Dendritic cell treated with granulocyte-macrophage colony-stimulating factor and Interleukin-4, amounts not matched to agents 40 ng/mL and 50 ng/mL, for 4 days (primary cell): ENCODE measurements at regions of chr9 and their contacts with region 1.

Region 1: DNA sequence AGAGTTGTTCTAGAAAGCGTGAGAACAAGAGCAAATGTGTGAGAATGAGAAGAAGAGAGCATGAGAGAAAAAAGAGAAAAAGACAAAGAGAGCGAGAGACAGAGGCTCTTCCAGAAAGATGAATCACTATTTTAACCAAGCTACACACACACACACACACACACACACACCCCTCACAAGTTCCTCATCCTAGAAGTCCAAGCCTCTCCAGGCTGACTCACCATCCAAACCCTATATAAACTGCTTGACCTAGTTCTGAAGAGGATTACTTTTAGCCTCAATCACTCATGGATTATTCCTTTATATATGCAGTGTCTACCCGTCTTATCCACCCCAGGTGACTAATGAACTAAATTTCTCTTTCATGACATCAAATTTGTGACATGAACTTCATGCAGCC is 37.6 kb downstream of the C9orf57 start:
- H3K4me3 Mint-ChIP-seq: no peak overlapping the region
- H3K27ac Mint-ChIP-seq: no peak overlapping the region
- H3K4me1 Mint-ChIP-seq: peaks cover 8% of the 10 kb centered on the region
- H3K27me3 Mint-ChIP-seq: no peaks in the 10 kb centered on the region

Region 2: GRCh38 chr9:71285191-71285656 is 737.6 kb before region 1 on chr9:
- intact Hi-C with region 1: loop called (anchors 5 kb)
- H3K4me3 Mint-ChIP-seq: no peak overlapping the region
- H3K27ac Mint-ChIP-seq: no peak overlapping the region
- H3K4me1 Mint-ChIP-seq: no peaks in the 10 kb centered on the region
- H3K27me3 Mint-ChIP-seq: no peaks in the 10 kb centered on the region

Region 3: DNA sequence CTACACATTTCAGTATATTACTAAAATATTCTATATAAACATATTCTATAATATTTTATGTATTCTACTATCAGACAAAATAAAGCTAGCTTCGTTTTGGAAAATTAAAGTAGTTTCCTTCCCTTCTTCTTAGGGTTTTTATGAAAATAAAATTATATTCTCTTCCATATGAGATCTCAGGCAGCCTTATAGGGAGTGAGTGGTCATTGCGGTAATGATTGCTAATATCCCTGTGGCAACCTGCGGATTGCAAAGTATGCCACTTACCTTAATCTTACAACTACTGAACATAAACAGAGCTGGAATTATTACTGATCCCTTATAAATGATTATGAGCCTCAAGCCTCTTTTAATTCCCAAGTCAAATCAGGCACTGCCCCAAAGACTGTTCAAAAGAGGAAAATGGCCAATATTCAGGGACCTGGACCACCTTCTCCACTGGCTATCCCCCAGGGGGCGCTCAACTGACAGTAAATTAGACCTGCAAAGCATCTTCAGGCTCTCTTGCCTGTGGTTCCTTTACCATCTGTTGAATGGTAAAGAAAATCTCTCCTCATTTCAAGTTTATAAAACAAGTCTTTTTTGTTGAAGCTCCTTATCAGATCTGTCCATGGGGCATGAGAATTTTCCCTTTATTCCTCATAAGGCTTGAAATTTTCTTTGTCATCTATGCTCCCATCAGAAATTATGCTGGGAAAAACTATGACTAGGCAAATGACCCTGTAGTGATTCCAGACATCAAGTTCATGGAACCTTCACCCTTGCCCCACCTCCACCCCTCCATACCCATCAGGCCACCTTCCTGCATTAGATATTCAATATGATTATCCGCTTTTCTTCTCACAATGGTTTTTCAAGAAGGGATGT is 418.4 kb before region 1 on chr9:
- intact Hi-C with region 1: loop called (anchors 10 kb)
- H3K4me3 Mint-ChIP-seq: no peak overlapping the region
- H3K27ac Mint-ChIP-seq: no peak overlapping the region
- H3K4me1 Mint-ChIP-seq: no peaks in the 10 kb centered on the region
- H3K27me3 Mint-ChIP-seq: no peaks in the 10 kb centered on the region

Region 4: DNA sequence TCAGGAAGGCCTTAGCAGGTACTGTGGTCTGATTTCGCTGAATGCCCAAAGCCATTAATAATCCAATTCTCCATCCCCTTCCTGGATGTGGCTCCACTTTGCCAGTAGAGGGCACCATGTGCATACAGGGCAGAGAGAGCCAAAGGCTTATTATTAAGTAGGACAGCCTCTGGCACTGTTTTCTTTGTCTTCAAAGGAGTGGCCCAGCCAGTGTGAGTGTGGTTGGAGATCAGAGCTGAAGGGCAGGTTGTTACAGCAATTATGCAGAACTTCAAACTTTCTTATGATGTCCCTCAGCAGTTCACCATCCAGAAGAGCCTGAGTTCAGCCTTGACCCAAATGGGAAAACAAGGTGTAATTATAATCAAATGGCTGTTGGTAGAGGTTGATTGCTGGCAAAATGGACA is 215.9 kb before region 1 on chr9:
- intact Hi-C with region 1: loop called (anchors 1 kb)
- H3K4me3 Mint-ChIP-seq: no peak overlapping the region
- H3K27ac Mint-ChIP-seq: no peak overlapping the region
- H3K4me1 Mint-ChIP-seq: no peaks in the 10 kb centered on the region
- H3K27me3 Mint-ChIP-seq: no peaks in the 10 kb centered on the region